ENCODE measurements at regions of chr15 and their contacts with region 1.

Region 1: GRCh38 chr15:43067717-43068461 is 37.9 kb downstream of the UBR1 start:
- DNase-seq: peak; percentile 47
- ATAC-seq: peak; percentile 95
- H3K4me3 Mint-ChIP-seq: no peak overlapping the region
- H3K27ac Mint-ChIP-seq: no peak overlapping the region
- H3K4me1 Mint-ChIP-seq: peaks cover 6% of the 10 kb centered on the region
- H3K27me3 Mint-ChIP-seq: no peaks in the 10 kb centered on the region

Region 2: DNA sequence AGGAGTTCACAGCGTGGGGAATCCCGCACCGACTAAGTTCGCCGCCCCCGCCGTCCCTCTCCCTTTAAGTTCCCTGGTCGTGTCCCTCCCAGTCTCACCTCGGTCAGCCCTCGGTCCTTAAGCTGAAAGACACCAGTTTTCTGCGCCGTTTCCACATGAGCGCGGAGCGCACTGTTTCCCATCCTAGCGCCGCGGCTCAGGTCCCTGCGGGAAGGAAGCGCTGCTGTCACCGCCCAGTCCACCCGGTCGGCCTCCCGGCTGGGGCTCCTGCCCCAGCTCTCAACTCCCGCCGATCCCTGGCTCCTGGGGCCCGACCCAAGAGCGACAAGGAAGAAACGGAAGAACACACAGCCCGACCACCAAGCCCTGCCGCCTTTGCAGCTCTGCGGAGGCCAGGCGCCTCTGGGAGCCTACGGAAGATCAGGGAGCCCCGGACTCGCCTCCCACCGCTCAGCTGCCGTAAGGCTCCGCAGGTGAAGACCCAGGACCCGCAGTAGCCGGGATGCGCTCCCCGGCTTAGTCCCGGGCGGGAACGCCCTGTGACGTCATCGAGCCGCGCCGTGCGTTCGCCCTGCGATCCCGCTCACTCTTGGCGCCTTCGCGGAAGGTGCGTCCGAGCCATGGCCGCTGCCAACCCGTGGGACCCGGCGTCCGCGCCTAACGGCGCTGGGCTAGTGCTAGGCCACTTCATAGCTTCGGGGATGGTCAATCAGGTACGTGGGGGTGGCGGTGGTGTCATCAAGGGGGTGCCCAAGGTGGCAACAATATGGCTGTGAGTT is 519.4 kb before region 1 on chr15 and contains the starts of genes HAUS2 and LRRC57:
- CTCF ChIA-PET with region 1: no interaction called
- POLR2A ChIA-PET with region 1: no interaction called
- intact Hi-C with region 1: no loop called
- DNase-seq: peak; percentile 93
- ATAC-seq: peak; percentile 89
- H3K4me3 Mint-ChIP-seq: peak within 1 kb of the TSS; percentile 96
- H3K27ac Mint-ChIP-seq: peak within 1 kb of the TSS; percentile 96
- H3K4me1 Mint-ChIP-seq: peaks cover 51% of the 10 kb centered on the region
- H3K27me3 Mint-ChIP-seq: no peaks in the 10 kb centered on the region
- total RNA-seq, gene HAUS2: 46.1 to 55.1 TPM
- total RNA-seq, gene LRRC57: 14.8 to 15.2 TPM

Region 3: GRCh38 chr15:42879443-42879842 is 188.4 kb before region 1 on chr15:
- CTCF ChIA-PET with region 1: no interaction called
- POLR2A ChIA-PET with region 1: no interaction called
- intact Hi-C with region 1: no loop called
- DNase-seq: no peak
- ATAC-seq: no peak
- H3K4me3 Mint-ChIP-seq: no peak overlapping the region
- H3K27ac Mint-ChIP-seq: no peak overlapping the region
- H3K4me1 Mint-ChIP-seq: peaks cover 2% of the 10 kb centered on the region
- H3K27me3 Mint-ChIP-seq: no peaks in the 10 kb centered on the region

Region 4: DNA sequence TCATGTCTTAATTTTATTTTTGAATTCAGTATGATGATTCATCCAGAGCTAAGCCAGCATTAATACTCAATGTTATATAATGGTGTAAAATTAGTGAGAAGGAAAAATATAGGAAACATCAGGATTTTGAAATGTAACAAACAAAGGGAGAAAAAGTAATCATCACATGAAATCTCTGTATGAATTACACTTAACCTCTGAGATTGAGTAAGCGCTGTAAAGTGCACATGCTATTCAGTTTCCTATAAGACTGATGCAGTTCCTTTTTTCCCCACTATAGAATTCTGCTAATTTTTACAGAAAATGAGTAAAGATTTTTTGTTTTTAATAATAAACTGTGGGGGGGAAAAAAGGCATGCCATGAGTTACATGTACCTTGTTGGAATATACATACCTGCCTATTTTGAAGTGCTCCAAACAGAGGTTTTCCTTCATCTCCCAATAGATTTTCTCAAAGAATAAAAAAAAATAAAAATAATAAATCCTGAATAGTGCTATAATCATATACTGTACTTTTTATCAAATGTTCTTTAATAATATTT is 83.3 kb before region 1 on chr15:
- CTCF ChIA-PET with region 1: no interaction called
- POLR2A ChIA-PET with region 1: interaction called, 10 read pairs
- intact Hi-C with region 1: no loop called
- DNase-seq: no peak
- ATAC-seq: no peak
- H3K4me3 Mint-ChIP-seq: no peak overlapping the region
- H3K27ac Mint-ChIP-seq: no peak overlapping the region
- H3K4me1 Mint-ChIP-seq: no peaks in the 10 kb centered on the region
- H3K27me3 Mint-ChIP-seq: no peaks in the 10 kb centered on the region

Region 5: DNA sequence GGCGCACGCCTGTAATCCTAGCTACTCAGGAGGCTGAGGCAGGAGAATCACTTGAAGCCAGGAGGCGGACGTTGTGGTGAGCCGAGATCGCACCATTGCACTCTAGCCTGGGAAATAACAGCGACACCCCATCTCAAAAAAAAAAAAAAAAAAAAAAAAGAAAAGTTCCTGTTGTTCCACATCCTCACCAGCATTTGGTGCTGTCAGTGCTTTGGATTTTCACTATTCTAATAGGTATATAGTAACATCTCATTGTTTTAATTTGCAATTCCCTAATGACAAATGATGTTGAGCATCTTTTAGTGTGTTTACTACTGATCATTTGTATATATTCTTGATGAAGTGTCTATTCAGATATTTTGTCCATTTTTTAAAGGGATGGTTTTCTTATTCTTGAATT is 13.4 kb after region 1 on chr15:
- CTCF ChIA-PET with region 1: no interaction called
- POLR2A ChIA-PET with region 1: no interaction called
- intact Hi-C with region 1: no loop called
- DNase-seq: no peak
- ATAC-seq: no peak
- H3K4me3 Mint-ChIP-seq: no peak overlapping the region
- H3K27ac Mint-ChIP-seq: no peak overlapping the region
- H3K4me1 Mint-ChIP-seq: peaks cover 5% of the 10 kb centered on the region
- H3K27me3 Mint-ChIP-seq: no peaks in the 10 kb centered on the region

Region 6: GRCh38 chr15:43105778-43106485 is 38.0 kb after region 1 on chr15 and contains the start of gene UBR1:
- CTCF ChIA-PET with region 1: no interaction called
- POLR2A ChIA-PET with region 1: no interaction called
- intact Hi-C with region 1: no loop called
- DNase-seq: peak; percentile 95
- ATAC-seq: peak; percentile 94
- H3K4me3 Mint-ChIP-seq: peak within 1 kb of the TSS; percentile 93
- H3K27ac Mint-ChIP-seq: peak within 1 kb of the TSS; percentile 96
- H3K4me1 Mint-ChIP-seq: peaks cover 41% of the 10 kb centered on the region
- H3K27me3 Mint-ChIP-seq: no peaks in the 10 kb centered on the region
- total RNA-seq, gene UBR1: 26.8 to 30.6 TPM